ENCODE measurements at regions of chr15 and their contacts with region 1.

Region 1: GRCh38 chr15:48285329-48286214 is 45.7 kb upstream of the DUT start:
- DNase-seq: peak; percentile 82
- H3K4me3 ChIP-seq: no peak overlapping the region
- H3K27ac ChIP-seq: no peak overlapping the region
- H3K27me3 ChIP-seq: no peaks in the 10 kb centered on the region
- CTCF ChIP-seq: peak; percentile 66

Region 2: DNA sequence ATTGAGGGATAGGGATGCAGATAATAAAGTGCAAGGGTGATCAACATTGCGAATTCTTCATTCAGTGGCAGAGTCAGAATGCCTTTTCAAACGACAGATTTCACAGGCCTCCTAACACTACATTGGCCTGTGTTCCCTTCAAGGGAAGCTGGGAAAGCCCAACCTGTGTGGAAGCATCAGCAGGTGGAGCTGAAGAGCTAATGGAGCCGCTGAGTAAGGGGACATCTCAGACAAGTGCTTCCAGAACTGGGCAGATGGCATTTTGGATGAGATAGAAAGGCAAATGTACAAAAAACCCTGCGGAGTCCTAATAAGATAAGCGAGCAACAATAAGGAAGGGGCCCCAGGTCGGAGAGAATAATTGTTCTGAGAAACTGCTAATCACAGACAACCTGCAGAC is 173.3 kb before region 1 on chr15:
- CTCF ChIA-PET with region 1: interaction called, 16 read pairs
- POLR2A ChIA-PET with region 1: no interaction called
- DNase-seq: no peak
- H3K4me3 ChIP-seq: no peak overlapping the region
- H3K27ac ChIP-seq: no peak overlapping the region
- H3K27me3 ChIP-seq: no peaks in the 10 kb centered on the region
- CTCF ChIP-seq: peak; percentile 62

Region 3: DNA sequence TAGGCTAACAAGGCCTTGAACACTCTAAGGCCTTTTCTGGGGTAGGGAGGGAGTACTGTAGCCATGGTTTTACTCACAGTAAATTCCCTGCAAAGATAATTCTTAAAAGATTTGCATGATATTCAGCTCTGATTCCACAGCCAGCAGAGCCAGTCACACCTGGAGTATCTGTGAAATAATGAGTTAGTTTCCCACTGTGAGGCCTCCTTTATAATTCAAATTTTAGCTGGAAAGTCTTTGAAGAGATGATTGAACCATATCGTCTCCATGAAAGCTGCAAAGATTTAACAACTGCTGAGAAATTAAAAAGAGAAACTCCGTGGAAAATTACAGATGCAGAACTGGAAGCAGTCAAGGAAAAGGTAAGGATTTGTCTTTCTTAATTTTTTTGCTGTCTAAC is 13.3 kb after region 1 on chr15:
- CTCF ChIA-PET with region 1: interaction called, 31 read pairs
- POLR2A ChIA-PET with region 1: no interaction called
- DNase-seq: no peak
- H3K4me3 ChIP-seq: no peak overlapping the region
- H3K27ac ChIP-seq: no peak overlapping the region
- H3K27me3 ChIP-seq: peaks cover 16% of the 10 kb centered on the region
- CTCF ChIP-seq: no peak

Region 4: GRCh38 chr15:48307586-48307985 is 22.0 kb after region 1 on chr15:
- CTCF ChIA-PET with region 1: interaction called, 18 read pairs
- POLR2A ChIA-PET with region 1: no interaction called
- DNase-seq: no peak
- H3K4me3 ChIP-seq: no peak overlapping the region
- H3K27ac ChIP-seq: no peak overlapping the region
- H3K27me3 ChIP-seq: peaks cover 2% of the 10 kb centered on the region
- CTCF ChIP-seq: no peak